ENCODE measurements at regions of chr4 and their contacts with region 1.

Region 1: DNA sequence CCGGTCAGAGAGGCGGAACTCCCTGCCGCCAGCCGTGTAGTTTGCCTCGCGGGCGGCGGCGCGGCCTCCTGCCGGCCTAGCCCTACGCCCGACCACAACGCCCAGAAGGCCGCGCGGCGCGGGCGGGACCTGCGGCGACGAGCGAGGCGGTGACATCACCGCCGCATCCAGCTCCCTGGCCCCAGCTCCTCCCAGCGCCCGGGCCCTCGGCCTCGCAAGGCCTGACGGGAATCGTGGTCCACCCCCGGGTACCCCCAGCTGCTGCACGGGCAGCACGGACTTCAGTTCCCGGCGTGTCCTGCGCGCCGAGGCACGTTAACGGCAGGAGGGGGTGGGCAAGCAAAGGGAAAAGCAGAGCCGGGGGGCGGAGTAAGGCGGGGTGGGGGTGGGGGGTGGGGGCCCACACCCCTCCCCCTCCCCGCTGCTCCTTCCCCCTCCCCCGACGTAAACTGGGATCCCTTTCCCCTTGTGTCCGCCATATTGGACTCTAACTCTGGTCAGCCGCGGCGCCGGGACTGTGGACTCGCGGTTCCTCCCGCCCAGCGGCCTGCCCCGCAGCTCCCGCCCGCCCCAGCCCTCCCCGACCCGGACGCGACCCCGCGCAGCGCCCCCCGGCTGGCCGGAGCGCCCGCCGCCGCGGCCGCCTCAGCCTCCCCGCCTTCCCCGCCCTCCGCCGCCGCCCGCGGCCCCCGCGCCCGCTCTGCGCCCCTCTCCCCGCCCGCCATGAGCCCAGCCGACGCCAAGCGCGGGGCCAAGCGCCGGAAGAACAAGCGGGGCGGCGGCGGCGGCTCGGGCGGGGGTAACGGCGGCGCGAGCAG is at the start of gene FAM193A:
- DNase-seq: peak; percentile 93 to 99 (median 99)
- ATAC-seq: peak; percentile 96
- H3K4me3 ChIP-seq: peak within 1 kb of the TSS; percentile 58
- H3K4me3 Mint-ChIP-seq: peak within 1 kb of the TSS; percentile 87 to 95 (median 92)
- H3K27ac ChIP-seq: peak within 1 kb of the TSS; percentile 92
- H3K27ac Mint-ChIP-seq: peak within 1 kb of the TSS; percentile 86 to 98 (median 92)
- H3K4me1 ChIP-seq: peaks cover 11 to 15% of the 10 kb centered on the region in 2 donors
- H3K4me1 Mint-ChIP-seq: peaks cover 5 to 36% (median 19%) of the 10 kb centered on the region in 7 donors
- H3K27me3 ChIP-seq: no peaks in the 10 kb centered on the region
- H3K27me3 Mint-ChIP-seq: no peaks in the 10 kb centered on the region
- total RNA-seq, gene FAM193A: 32.8 to 47.2 (median 44.1) TPM

Region 2: GRCh38 chr4:705278-706082 is 1830.9 kb before region 1 on chr4 and contains the start of gene PCGF3:
- CTCF ChIA-PET with region 1: no interaction called
- POLR2A ChIA-PET with region 1: no interaction called
- intact Hi-C with region 1: loop called in 1 of 2 experiments (anchors 5 kb)
- DNase-seq: peak; percentile 89 to 99 (median 92)
- ATAC-seq: peak; percentile 99
- H3K4me3 ChIP-seq: peak within 1 kb of the TSS; percentile 84
- H3K4me3 Mint-ChIP-seq: peak within 1 kb of the TSS; percentile 68 to 96 (median 83)
- H3K27ac ChIP-seq: peak within 1 kb of the TSS; percentile 96
- H3K27ac Mint-ChIP-seq: peak within 1 kb of the TSS; percentile 40 to 93 (median 59)
- H3K4me1 ChIP-seq: peaks cover 9 to 11% of the 10 kb centered on the region in 2 donors
- H3K4me1 Mint-ChIP-seq: peaks cover 21 to 30% (median 23%) of the 10 kb centered on the region in 7 donors
- H3K27me3 ChIP-seq: no peaks in the 10 kb centered on the region
- H3K27me3 Mint-ChIP-seq: no peaks in the 10 kb centered on the region
- total RNA-seq, gene PCGF3: 32.7 to 66.8 (median 42.3) TPM

Region 3: DNA sequence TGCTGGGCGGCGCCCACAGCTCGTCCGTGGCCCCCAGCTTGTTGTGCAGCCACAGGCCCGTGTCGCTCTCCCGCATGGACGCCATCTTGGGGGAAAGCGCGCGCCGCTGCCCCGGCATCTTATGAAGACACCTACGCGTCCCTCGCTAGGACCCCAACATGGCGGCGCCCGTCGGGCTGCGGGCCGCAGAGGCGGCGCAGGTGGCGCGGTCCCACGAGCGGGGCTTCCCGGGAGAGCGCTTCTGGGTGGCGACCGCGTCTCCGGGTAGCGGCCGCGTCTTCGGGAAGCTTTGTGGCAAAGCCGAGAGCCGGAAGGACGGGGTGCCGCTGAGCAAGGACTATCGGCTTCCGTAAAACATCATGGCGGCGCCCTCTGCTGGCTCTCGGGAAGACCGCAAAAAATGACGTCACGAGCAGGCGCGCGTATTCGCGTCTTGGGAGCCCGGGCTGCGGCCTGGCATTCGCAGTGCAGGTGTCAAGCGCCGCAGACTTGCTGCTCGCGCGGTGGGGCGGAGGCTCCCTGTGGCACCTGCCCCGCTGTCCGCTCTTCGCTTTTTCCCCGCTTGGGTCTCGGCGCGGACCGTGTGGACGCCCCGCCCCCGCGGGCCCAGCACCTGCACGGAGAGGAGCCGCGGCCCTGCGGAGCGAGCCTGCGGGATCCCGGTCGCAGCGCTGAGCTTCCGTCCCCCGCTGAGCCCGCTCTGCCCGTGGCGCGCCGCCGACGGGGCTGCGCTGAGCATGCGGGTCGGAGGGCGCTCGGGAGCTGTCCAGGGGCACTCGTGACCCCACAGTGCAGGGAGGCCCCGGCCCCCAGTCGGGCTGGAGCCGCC is 527.3 kb before region 1 on chr4 and contains the start of gene NELFA:
- CTCF ChIA-PET with region 1: no interaction called
- POLR2A ChIA-PET with region 1: no interaction called
- intact Hi-C with region 1: loop called in 1 of 2 experiments (anchors 1 kb)
- DNase-seq: peak; percentile 92 to 98 (median 96)
- ATAC-seq: peak; percentile 93
- H3K4me3 ChIP-seq: peak within 1 kb of the TSS; percentile 96
- H3K4me3 Mint-ChIP-seq: peak within 1 kb of the TSS; percentile 81 to 96 (median 94)
- H3K27ac ChIP-seq: peak within 1 kb of the TSS; percentile 99
- H3K27ac Mint-ChIP-seq: peak within 1 kb of the TSS; percentile 91 to 99 (median 96)
- H3K4me1 ChIP-seq: peaks cover 13 to 24% of the 10 kb centered on the region in 2 donors
- H3K4me1 Mint-ChIP-seq: peaks cover 30 to 38% (median 34%) of the 10 kb centered on the region in 7 donors
- H3K27me3 ChIP-seq: no peaks in the 10 kb centered on the region
- H3K27me3 Mint-ChIP-seq: peaks cover 0 to 20% (median 0%) of the 10 kb centered on the region in 5 donors
- total RNA-seq, gene NELFA: 32.7 to 50.1 (median 43.6) TPM

Region 4: GRCh38 chr4:2241410-2242353 is 294.7 kb before region 1 on chr4 and contains the starts of genes HAUS3 and POLN:
- CTCF ChIA-PET with region 1: no interaction called
- POLR2A ChIA-PET with region 1: no interaction called
- intact Hi-C with region 1: loop called (anchors 1 kb)
- DNase-seq: peak; percentile 96 to 100 (median 99)
- ATAC-seq: peak; percentile 97
- H3K4me3 ChIP-seq: peak within 1 kb of the TSS; percentile 93
- H3K4me3 Mint-ChIP-seq: peak within 1 kb of the TSS; percentile 80 to 95 (median 91)
- H3K27ac ChIP-seq: peak within 1 kb of the TSS; percentile 89
- H3K27ac Mint-ChIP-seq: peak within 1 kb of the TSS; percentile 83 to 95 (median 90)
- H3K4me1 ChIP-seq: peaks cover 37 to 38% of the 10 kb centered on the region in 2 donors
- H3K4me1 Mint-ChIP-seq: peaks cover 48 to 65% (median 60%) of the 10 kb centered on the region in 7 donors
- H3K27me3 ChIP-seq: no peaks in the 10 kb centered on the region
- H3K27me3 Mint-ChIP-seq: peaks cover 0 to 6% (median 0%) of the 10 kb centered on the region in 5 donors
- total RNA-seq, gene HAUS3: 24.4 to 88.2 (median 34.1) TPM
- total RNA-seq, gene POLN: 2.4 to 5.4 (median 3.2) TPM

Region 5: GRCh38 chr4:2412885-2413716 is 123.3 kb before region 1 on chr4:
- CTCF ChIA-PET with region 1: no interaction called
- POLR2A ChIA-PET with region 1: no interaction called
- intact Hi-C with region 1: loop called (anchors 1 kb)
- DNase-seq: peak; percentile 60 to 89 (median 85)
- ATAC-seq: peak; percentile 84
- H3K4me3 ChIP-seq: peak overlapping the region; percentile 29
- H3K4me3 Mint-ChIP-seq: peak overlapping the region; percentile 74 to 99 (median 84)
- H3K27ac ChIP-seq: peak overlapping the region; percentile 71
- H3K27ac Mint-ChIP-seq: peak overlapping the region; percentile 90 to 100 (median 96)
- H3K4me1 ChIP-seq: peaks cover 41 to 48% of the 10 kb centered on the region in 2 donors
- H3K4me1 Mint-ChIP-seq: peaks cover 35 to 75% (median 67%) of the 10 kb centered on the region in 7 donors
- H3K27me3 ChIP-seq: no peaks in the 10 kb centered on the region
- H3K27me3 Mint-ChIP-seq: peaks cover 0 to 25% (median 0%) of the 10 kb centered on the region in 5 donors

Region 6: DNA sequence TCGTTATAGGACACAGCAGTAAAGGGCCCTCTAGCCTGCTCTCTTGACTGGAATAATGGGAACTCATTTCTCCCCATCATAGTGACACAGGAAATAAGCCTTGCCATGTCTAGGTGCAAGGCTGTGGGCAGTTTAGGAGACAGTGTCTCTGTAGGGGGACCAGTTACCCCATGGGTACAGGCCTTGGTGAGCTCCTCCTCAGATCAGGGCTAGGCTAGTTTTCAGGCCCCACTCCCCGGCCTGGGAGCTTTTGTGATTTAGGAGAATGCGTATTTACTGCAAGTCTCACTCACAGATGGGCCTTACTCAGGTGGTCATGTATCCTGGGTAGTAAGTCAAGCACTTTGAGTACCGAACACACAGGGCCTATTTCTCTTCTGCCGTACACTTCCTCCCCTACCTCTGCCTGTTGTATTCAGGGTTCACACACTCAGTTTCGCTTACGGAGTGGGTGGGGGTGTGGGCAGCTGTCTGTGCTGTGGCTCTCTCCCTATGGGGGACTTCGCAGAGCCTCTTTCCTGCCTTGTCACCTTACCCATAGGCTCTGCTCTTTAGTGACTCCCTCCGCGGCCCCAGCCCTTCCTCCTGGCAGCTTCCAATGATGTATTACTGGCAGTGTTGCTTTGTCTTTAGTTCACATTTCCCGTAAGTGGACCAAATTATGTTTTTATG is 34.3 kb after region 1 on chr4:
- CTCF ChIA-PET with region 1: no interaction called
- POLR2A ChIA-PET with region 1: no interaction called
- intact Hi-C with region 1: loop called (anchors 2 kb)
- DNase-seq: peak; percentile 17 to 75 (median 62)
- ATAC-seq: peak; percentile 97
- H3K4me3 ChIP-seq: peak overlapping the region; percentile 19
- H3K4me3 Mint-ChIP-seq: peak overlapping the region; percentile 24 to 75 (median 70)
- H3K27ac ChIP-seq: peak overlapping the region; percentile 30
- H3K27ac Mint-ChIP-seq: peak overlapping the region; percentile 78 to 92 (median 88)
- H3K4me1 ChIP-seq: peaks cover 12 to 20% of the 10 kb centered on the region in 2 donors
- H3K4me1 Mint-ChIP-seq: peaks cover 45 to 79% (median 69%) of the 10 kb centered on the region in 7 donors
- H3K27me3 ChIP-seq: no peaks in the 10 kb centered on the region
- H3K27me3 Mint-ChIP-seq: no peaks in the 10 kb centered on the region

Region 7: GRCh38 chr4:3074078-3074795 is 537.8 kb after region 1 on chr4 and contains the starts of genes HTT and HTT-AS:
- CTCF ChIA-PET with region 1: interaction called, 3 read pairs
- POLR2A ChIA-PET with region 1: no interaction called
- intact Hi-C with region 1: loop called in 1 of 2 experiments (anchors 1 kb)
- DNase-seq: peak; percentile 91 to 99 (median 96)
- ATAC-seq: peak; percentile 90
- H3K4me3 ChIP-seq: peak within 1 kb of the TSS; percentile 87
- H3K4me3 Mint-ChIP-seq: peak within 1 kb of the TSS; percentile 86 to 98 (median 90)
- H3K27ac ChIP-seq: peak within 1 kb of the TSS; percentile 89
- H3K27ac Mint-ChIP-seq: peak within 1 kb of the TSS; percentile 70 to 95 (median 93)
- H3K4me1 ChIP-seq: peaks cover 10 to 16% of the 10 kb centered on the region in 2 donors
- H3K4me1 Mint-ChIP-seq: peaks cover 17 to 35% (median 30%) of the 10 kb centered on the region in 7 donors
- H3K27me3 ChIP-seq: no peaks in the 10 kb centered on the region
- H3K27me3 Mint-ChIP-seq: no peaks in the 10 kb centered on the region
- total RNA-seq, gene HTT: 61.4 to 115 (median 72.5) TPM
- total RNA-seq, gene HTT-AS: not detected

Measured in naive thymus-derived CD4-positive, alpha-beta T cell (primary cell).